Calu3 (cell line): ENCODE measurements at regions of chr6 and their contacts with region 1.

Region 1: GRCh38 chr6:166106076-166106686 is 61.5 kb downstream of the TBXT start:
- DNase-seq: peak; percentile 80
- H3K4me3 Mint-ChIP-seq: no peak overlapping the region
- H3K27ac Mint-ChIP-seq: no peak overlapping the region
- H3K4me1 Mint-ChIP-seq: no peaks in the 10 kb centered on the region
- H3K27me3 Mint-ChIP-seq: peaks cover 42% of the 10 kb centered on the region
- CTCF ChIP-seq: peak; percentile 84

Region 2: DNA sequence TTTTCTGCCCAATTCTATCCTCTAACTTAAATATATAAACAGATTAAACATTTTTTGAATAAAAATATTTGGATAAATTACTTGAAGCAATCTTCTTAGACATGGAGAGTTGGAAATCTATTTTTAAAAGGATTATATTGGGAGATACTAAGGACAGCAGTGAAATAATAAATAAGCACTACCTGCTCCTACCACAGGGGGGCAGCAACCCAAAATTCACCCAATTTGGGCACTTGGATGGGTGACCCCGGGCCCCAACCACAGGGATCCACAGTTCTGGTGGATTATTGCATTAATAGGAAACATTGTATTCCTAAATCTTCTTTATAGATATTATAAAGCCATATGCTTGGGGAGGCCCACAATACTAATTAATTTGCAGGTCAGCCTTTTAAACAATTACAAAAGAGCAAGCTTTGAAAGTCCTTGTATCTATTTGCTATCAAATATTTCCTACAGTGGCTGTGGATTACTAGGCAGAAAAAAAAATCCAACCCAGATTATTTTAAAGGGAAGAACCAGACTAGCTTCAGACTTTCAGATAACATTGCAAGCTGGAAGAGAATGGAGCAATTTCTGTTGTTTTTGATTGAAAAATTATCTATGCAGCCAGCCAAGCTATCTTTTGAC is 376.8 kb before region 1 on chr6:
- CTCF ChIA-PET with region 1: no interaction called
- intact Hi-C with region 1: loop called (anchors 10 kb)
- DNase-seq: peak; percentile 73
- H3K4me3 Mint-ChIP-seq: no peak overlapping the region
- H3K27ac Mint-ChIP-seq: no peak overlapping the region
- H3K4me1 Mint-ChIP-seq: no peaks in the 10 kb centered on the region
- H3K27me3 Mint-ChIP-seq: no peaks in the 10 kb centered on the region
- CTCF ChIP-seq: peak; percentile 83

Region 3: GRCh38 chr6:166068768-166069167 is 37.4 kb before region 1 on chr6:
- CTCF ChIA-PET with region 1: no interaction called
- intact Hi-C with region 1: no loop called
- DNase-seq: no peak
- H3K4me3 Mint-ChIP-seq: no peak overlapping the region
- H3K27ac Mint-ChIP-seq: no peak overlapping the region
- H3K4me1 Mint-ChIP-seq: no peaks in the 10 kb centered on the region
- H3K27me3 Mint-ChIP-seq: peaks cover 24% of the 10 kb centered on the region
- CTCF ChIP-seq: no peak